ENCODE measurements at regions of chr5 and their contacts with region 1.

Region 1: DNA sequence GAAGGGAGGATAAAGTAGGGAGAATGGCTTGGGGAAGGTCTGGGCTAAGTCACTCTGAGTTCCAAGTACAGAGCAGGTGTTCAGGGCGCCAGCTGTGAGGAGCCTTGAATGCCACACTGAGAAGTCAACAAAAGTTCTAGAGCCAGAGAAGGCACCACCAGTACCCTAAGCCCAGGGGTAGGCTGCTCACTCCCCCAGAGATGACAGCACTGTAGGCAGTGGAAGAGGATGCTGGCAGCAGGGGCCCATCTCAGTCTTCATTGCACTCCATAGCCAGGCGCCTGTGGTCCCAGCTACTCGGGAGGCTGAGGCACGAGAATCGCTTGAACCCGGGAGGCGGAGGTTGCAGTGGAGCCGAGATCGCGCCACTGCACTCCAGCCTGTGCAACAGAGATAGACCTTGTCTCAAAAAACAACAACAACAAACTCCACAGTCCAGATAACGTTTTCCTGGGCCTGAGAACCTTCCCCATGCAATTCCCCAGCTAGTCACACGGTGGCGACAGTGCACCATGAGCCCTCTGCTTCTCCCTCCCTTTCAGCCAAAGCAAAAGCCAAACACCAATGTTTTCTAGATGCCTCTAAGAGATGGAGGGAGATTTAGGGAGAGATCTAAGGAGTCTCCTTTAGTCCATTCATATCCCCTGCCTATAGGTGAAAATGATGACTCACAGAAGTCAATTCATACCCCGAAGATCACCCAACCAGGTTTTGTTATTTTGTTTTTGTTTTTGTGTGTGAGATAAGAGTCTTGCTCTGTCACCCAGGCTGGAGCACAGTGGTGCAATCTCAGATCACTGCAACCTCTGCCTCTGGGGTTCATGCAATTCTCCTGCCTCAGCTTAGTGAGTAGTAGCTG is 19.8 kb upstream of the NSD1 start:
- DNase-seq: peak; percentile 82
- ATAC-seq: peak; percentile 15
- H3K4me3 Mint-ChIP-seq: no peak overlapping the region
- H3K27ac Mint-ChIP-seq: no peak overlapping the region; the same call in 1 of the 2 replicates
- H3K4me1 Mint-ChIP-seq: peaks cover 11% of the 10 kb centered on the region
- H3K27me3 Mint-ChIP-seq: peaks cover 15% of the 10 kb centered on the region
- CTCF ChIP-seq: peak; percentile 93

Region 2: DNA sequence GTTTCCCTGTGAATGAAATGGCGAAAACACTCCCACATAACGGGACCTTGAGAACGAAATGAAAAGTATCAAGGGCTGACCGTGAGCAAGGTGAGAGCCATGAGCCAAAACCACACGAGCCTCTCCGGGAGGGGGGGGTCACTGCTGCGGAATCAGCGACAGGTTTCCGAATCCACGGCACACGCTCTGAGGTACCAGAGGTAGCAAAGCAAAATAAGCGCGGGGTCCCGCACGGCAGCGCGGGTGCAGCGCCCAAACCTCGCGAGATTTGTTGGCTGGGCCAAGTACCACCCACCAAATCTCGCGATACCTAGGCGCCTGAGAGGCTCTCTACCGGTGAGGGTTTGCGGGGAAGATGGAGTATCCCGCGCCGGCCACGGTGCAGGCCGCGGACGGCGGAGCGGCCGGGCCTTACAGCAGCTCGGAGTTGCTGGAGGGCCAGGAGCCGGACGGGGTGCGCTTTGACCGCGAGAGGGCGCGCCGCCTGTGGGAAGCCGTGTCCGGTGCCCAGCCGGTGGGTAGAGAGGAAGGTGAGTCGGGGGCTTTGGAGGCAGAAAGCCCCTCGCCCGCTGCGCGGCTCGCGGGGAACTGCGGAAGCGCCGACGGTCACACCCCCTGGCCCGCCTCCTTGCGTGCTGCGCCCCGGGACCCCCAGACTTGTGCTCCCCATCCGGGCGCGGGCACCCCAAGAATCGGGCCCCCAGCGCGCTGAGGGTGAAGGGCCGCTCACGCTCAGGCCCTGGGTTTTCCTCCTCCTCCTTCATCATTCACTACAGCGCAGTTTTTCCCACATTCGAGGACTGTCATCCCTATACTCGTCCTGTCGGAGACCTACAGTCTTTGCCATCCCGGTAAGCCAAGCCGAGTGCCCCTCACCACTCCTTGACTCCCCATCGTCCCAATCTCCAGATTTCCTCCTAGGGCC is 91.1 kb before region 1 on chr5 and contains the start of gene ZNF346:
- CTCF ChIA-PET with region 1: interaction called, 11 read pairs
- POLR2A ChIA-PET with region 1: no interaction called
- DNase-seq: peak; percentile 91
- ATAC-seq: peak; percentile 97
- H3K4me3 Mint-ChIP-seq: peak within 1 kb of the TSS; percentile 98
- H3K27ac Mint-ChIP-seq: peak within 1 kb of the TSS; percentile 95
- H3K4me1 Mint-ChIP-seq: peaks cover 11% of the 10 kb centered on the region
- H3K27me3 Mint-ChIP-seq: no peaks in the 10 kb centered on the region
- CTCF ChIP-seq: peak; percentile 38; the same call in 1 of the 2 replicates
- total RNA-seq, gene ZNF346: 18.4 to 25.4 TPM (median 19.4 TPM) in 3 replicates

Region 3: GRCh38 chr5:177077335-177077734 is 36.5 kb before region 1 on chr5:
- CTCF ChIA-PET with region 1: interaction called, 156 read pairs
- POLR2A ChIA-PET with region 1: no interaction called
- DNase-seq: no peak
- ATAC-seq: peak; percentile 64
- H3K4me3 Mint-ChIP-seq: no peak overlapping the region
- H3K27ac Mint-ChIP-seq: 0 out of 2 replicates have a peak overlapping the region, but pooled peaks have one; percentile 17
- H3K4me1 Mint-ChIP-seq: no peaks in the 10 kb centered on the region
- H3K27me3 Mint-ChIP-seq: no peaks in the 10 kb centered on the region
- CTCF ChIP-seq: no peak

Region 4: DNA sequence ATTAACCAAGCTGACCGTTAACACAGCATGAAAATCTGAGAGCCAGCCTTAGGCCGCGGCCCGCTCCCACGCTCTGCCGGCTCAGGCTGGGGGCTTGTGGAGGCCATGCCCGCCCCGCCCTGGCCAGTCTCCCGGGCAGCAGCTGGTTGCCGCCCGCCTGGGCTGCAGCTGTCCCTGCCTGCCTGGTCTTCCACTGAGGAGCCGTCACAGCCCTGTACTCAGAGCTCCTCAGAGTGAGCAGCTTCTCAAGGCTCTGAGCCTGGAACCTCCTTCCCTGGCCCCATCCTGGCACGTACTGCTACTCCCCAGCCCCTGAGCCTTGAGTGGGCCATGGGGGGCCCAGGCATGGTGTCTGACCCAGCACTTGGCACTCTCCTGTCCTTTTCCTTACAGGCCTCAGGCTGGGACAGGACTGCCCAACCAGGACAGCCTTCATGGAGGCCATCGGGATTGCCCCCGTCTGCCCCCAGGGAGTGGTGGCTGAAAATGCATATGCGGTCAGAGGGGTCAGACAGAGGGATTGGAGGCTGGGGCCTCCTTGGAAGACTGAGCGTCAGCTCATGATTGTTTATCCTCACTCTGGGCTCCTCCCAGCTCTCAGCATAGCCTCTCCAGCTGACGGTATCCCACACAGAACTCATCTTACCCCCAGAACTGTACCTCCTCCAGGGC is 15.2 kb before region 1 on chr5:
- CTCF ChIA-PET with region 1: interaction called, 45 read pairs
- POLR2A ChIA-PET with region 1: no interaction called
- DNase-seq: no peak
- ATAC-seq: no peak; the same call in 1 of the 2 replicates
- H3K4me3 Mint-ChIP-seq: no peak overlapping the region
- H3K27ac Mint-ChIP-seq: peak overlapping the region; percentile 70
- H3K4me1 Mint-ChIP-seq: peaks cover 21% of the 10 kb centered on the region
- H3K27me3 Mint-ChIP-seq: no peaks in the 10 kb centered on the region; the same call in 1 of the 2 replicates
- CTCF ChIP-seq: no peak

Region 5: DNA sequence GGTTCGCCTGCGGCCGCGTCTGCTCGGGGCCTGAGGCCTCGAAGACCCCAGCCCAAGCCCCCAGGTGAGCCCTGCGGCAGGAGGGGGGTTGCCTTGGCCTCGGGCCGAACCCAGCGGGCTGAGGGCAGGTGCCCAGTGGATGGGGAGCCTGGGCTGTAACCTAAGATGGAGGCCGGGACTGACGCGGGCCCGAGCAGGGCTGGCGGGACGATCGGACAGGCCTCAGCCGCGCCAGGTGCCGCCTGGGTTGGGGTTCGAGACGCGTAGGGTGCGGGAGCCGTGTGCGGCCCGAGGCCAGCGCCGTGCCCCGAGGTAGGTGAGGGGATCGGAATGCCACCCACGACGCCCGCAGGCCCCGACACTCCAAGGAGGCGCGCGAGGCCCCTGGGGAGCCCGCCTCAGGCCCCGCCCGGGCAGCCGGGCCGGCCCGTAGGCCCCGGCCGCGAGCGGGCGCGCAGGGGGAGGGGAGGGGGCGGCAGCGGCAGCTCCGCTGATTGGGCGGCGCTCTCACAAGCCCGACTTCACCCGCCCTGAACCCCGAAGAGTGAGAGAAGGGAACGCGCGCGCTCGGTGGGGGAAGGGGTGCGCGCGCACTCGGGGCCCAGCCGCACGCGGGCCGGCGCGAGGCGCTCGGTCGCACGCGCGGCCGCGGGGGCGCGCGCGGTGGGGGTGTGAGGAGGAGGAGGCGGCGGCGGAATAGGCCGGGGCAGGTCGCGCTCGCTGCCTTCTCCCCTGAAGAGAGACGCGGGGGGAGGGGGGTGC is 19.5 kb after region 1 on chr5 and contains the start of gene NSD1:
- CTCF ChIA-PET with region 1: interaction called, 22 read pairs
- POLR2A ChIA-PET with region 1: interaction called, 5 read pairs
- DNase-seq: peak; percentile 93
- ATAC-seq: peak; percentile 69
- H3K4me3 Mint-ChIP-seq: peak within 1 kb of the TSS; percentile 85
- H3K27ac Mint-ChIP-seq: peak within 1 kb of the TSS; percentile 68; the same call in 1 of the 2 replicates
- H3K4me1 Mint-ChIP-seq: peaks cover 44% of the 10 kb centered on the region
- H3K27me3 Mint-ChIP-seq: no peaks in the 10 kb centered on the region; the same call in 1 of the 2 replicates
- CTCF ChIP-seq: no peak
- total RNA-seq, gene NSD1: 144 to 153 TPM (median 148 TPM) in 3 replicates

Region 6: GRCh38 chr5:177154003-177154643 is 40.3 kb after region 1 on chr5:
- CTCF ChIA-PET with region 1: no interaction called
- POLR2A ChIA-PET with region 1: no interaction called
- DNase-seq: no peak
- ATAC-seq: peak; percentile 50; the same call in 1 of the 2 replicates
- H3K4me3 Mint-ChIP-seq: no peak overlapping the region
- H3K27ac Mint-ChIP-seq: peak overlapping the region; percentile 52; the same call in 1 of the 2 replicates
- H3K4me1 Mint-ChIP-seq: peaks cover 4% of the 10 kb centered on the region; the same call in 1 of the 2 replicates
- H3K27me3 Mint-ChIP-seq: no peaks in the 10 kb centered on the region
- CTCF ChIP-seq: no peak